ENCODE measurements at regions of chr5 and their contacts with region 1.

Region 1: DNA sequence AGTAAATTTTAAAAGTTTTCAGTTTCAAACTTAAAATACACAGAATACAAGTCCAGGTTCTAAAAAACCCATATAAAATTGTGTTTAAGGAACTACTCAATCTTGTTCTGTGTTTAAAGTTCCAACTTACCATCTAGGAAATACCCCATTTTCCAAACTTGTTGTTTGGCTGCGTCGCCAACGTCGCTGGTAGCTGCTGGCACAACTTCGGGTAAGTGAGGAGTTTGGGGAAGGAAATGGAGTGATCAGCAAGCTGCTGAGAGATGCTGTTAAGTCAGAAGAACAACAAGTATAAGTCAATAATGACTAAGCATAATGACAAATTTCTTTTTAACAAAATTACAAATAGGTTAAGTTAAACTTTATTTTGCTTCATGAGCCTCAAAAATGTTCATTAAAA is 71.3 kb upstream of the RAPGEF6 start:
- DNase-seq: no peak
- ATAC-seq: no peak

Region 2: DNA sequence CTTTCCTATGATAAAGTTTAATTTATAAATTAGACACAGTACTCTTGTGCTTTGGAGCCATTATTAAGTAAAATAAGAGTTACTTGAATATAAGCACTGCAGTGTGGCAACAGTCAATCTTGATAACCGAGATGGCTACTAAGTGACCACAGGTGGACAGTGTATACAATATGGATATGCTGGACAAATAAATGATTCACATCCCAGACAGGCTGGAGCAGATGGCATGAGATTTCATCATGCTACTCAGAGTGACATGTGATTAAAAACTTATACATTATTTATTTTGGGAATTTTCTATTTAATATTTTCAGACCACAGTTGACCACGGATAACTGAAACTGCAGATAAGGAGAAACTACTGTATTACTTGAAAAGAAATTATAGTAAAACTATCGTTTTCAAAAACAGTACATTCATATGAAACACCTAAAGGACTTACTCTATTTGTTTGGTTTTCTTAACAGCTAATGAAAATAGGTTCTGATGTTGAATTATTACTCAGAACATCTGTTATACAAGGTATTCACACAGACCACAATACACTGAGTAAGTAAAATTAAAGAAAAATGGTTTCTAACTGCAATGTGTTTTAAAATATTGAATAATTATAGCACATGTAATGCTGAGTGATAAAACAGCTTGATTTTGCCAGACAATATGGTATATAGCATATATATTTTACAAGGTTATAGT is 519.6 kb before region 1 on chr5:
- intact Hi-C with region 1: no loop called
- DNase-seq: no peak
- ATAC-seq: no peak

Region 3: GRCh38 chr5:131776450-131776849 is 70.2 kb after region 1 on chr5:
- intact Hi-C with region 1: loop called in 1 of 2 experiments (anchors 5 kb)
- DNase-seq: no peak
- ATAC-seq: no peak

Measured in left cardiac atrium (tissue), 4 donors.